Activated T-helper 1 cell treated with anti-CD3 and anti-CD28 coated beads, Interleukin-12 subunit alpha, Interleukin-12 subunit beta, Interleukin-2, Interleukin-4 antibody, amounts not matched to agents 30 ng/mL and 10 ng/mL and 1 ng/mL, durations not matched to agents 14 hours and 24 hours and 36 hours (primary cell): ENCODE measurements at regions of chr15 and their contacts with region 1.

Region 1: GRCh38 chr15:76270886-76271285 is 40.4 kb downstream of the ETFA start:
- DNase-seq: no peak
- H3K4me3 Mint-ChIP-seq: no peak overlapping the region
- H3K27ac Mint-ChIP-seq: no peak overlapping the region
- H3K4me1 Mint-ChIP-seq: no peaks in the 10 kb centered on the region
- H3K27me3 Mint-ChIP-seq: no peaks in the 10 kb centered on the region

Region 2: GRCh38 chr15:75884041-75884440 is 386.8 kb before region 1 on chr15:
- intact Hi-C with region 1: no loop called
- DNase-seq: no peak
- H3K4me3 Mint-ChIP-seq: no peak overlapping the region
- H3K27ac Mint-ChIP-seq: no peak overlapping the region
- H3K4me1 Mint-ChIP-seq: no peaks in the 10 kb centered on the region
- H3K27me3 Mint-ChIP-seq: no peaks in the 10 kb centered on the region

Region 3: DNA sequence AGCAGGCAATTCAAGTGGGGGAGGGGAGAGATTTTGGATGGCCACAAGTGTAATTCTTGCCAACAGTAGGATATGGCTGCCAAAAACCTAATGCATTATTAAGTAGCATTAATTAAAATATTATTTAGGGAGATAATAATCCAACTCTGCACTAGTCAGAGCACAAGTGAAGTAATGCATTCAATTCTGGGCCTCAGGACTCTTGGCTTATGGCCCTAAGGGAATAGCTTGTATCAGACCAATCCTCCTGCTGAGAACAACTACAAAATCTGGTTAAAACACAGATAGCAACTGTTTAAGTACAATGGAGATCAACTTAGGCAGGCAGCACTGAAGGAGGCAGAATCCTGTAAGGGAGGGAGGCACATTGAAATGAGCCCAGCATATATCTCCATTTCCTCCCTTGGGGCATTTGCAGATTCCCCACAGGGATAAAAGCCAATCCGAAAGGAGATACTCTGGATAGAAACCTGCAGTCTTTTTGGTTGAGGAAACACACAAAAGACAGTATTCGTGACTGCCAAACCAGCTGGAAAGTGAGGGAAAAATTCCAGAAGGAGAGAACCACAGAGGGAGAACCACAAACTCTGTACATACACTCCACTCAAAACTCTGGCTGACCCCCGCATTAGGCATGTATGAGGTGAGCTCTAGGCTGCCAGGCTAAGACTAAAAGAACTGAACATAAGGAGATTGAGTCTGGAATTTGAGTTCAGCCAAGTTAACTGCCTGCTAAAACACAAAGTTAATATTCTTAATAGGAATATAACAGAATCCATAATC is 17.0 kb before region 1 on chr15:
- intact Hi-C with region 1: loop called (anchors 1 kb)
- DNase-seq: no peak
- H3K4me3 Mint-ChIP-seq: no peak overlapping the region
- H3K27ac Mint-ChIP-seq: no peak overlapping the region
- H3K4me1 Mint-ChIP-seq: no peaks in the 10 kb centered on the region
- H3K27me3 Mint-ChIP-seq: no peaks in the 10 kb centered on the region